Endothelial cell of umbilical vein (primary cell): ENCODE measurements at regions of chr11 and their contacts with region 1.

Region 1: GRCh38 chr11:63635762-63636465 is 21.7 kb upstream of the PLAAT3 start:
- DNase-seq: peak; percentile 68
- H3K4me3 ChIP-seq: no peak overlapping the region
- H3K27ac ChIP-seq: no peak overlapping the region
- H3K4me1 ChIP-seq: no peaks in the 10 kb centered on the region
- H3K27me3 ChIP-seq: no peaks in the 10 kb centered on the region
- CTCF ChIP-seq: peak; percentile 66
- POLR2A ChIP-seq: no peak

Region 2: DNA sequence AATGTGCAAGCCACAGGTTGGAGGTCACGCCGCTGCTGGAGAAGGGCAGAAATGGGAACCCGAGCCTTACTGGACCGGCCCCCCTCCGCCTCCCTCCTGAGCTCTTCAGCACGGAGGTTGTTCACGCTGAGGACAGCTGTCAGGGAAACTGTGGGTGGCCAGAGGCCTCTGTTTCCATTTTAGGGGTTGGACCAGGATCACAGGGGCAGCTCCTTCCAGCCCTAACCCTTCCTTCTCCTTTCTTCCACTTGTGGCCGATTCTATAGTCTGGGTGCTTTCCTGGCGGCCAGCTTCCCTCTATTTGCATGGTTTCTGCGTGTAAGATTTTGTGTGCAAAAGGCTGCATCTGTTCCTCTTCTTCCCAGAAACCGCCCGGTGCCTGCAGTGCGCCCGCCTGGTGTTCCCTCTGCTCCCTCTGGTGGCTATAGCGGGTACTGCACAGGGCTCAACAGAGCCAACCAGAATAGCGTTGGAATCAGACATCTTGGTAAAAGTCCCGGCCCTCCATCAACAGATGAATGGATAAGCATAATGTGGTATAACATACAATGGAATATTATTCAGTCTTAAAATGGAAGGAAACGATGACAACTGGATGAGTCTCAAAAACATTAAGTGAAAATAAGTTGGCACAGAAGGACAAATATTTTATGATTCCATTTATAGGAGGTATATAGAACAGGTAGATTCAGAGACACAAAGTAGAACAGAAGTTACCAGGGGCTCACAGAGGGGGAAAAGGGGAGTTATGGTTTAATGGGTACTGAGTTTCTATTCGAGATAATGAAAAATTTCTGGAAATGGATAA is 611.9 kb before region 1 on chr11:
- CTCF ChIA-PET with region 1: no interaction called
- POLR2A ChIA-PET with region 1: no interaction called
- dilution Hi-C with region 1: no loop called
- intact Hi-C with region 1: loop called (anchors 5 kb)
- DNase-seq: peak; percentile 69
- H3K4me3 ChIP-seq: no peak overlapping the region
- H3K27ac ChIP-seq: no peak overlapping the region
- H3K4me1 ChIP-seq: no peaks in the 10 kb centered on the region
- H3K27me3 ChIP-seq: peaks cover 4 to 10% of the 10 kb centered on the region in 2 experiments
- CTCF ChIP-seq: peak; percentile 98 to 99
- POLR2A ChIP-seq: no peak

Region 3: DNA sequence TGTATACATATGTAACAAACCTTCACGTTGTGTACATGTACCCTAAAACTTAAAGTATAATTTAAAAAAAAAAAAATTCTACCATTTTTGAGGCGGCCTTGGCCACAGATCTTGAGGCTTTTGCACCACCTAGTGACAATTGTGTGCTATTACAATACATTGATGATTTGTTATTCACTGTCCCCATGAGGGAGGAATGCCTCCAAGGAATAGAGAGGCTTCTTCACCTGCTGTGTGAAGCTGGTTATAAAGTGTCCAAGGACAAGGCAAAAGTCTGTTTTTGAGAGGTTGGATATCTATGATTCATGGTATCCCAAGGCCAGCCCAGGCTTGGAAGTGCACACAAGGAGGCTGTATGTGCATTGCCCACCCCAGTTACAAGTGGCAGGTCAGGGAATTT is 423.2 kb before region 1 on chr11:
- CTCF ChIA-PET with region 1: no interaction called
- POLR2A ChIA-PET with region 1: no interaction called
- dilution Hi-C with region 1: no loop called
- intact Hi-C with region 1: loop called (anchors 10 kb)
- DNase-seq: peak; percentile 14
- H3K4me3 ChIP-seq: no peak overlapping the region
- H3K27ac ChIP-seq: no peak overlapping the region
- H3K4me1 ChIP-seq: no peaks in the 10 kb centered on the region
- H3K27me3 ChIP-seq: peaks cover 0 to 2% of the 10 kb centered on the region in 2 experiments
- CTCF ChIP-seq: peak; percentile 34 to 36
- POLR2A ChIP-seq: no peak

Region 4: DNA sequence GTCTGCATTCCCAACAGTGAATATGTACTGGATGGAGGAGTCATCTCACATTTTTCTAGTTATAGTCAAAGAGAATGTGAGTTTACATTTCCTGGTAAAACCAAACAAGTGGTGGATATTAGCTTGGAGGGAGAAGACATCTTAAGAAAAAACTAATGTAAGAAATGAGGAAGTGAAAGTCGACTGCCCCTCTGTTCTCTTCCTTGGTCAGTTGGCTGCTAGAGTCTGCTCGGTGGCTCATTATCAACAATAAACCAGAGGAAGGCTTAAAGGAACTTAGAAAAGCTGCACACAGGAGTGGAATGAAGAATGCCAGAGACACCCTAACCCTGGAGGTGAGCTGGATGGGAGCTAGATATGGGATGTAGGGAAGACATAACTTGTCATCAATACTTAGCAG is 260.5 kb before region 1 on chr11:
- CTCF ChIA-PET with region 1: no interaction called
- POLR2A ChIA-PET with region 1: no interaction called
- dilution Hi-C with region 1: no loop called
- intact Hi-C with region 1: no loop called
- DNase-seq: no peak
- H3K4me3 ChIP-seq: no peak overlapping the region
- H3K27ac ChIP-seq: no peak overlapping the region
- H3K4me1 ChIP-seq: no peaks in the 10 kb centered on the region
- H3K27me3 ChIP-seq: peaks cover 0 to 5% of the 10 kb centered on the region in 2 experiments
- CTCF ChIP-seq: no peak
- POLR2A ChIP-seq: no peak

Region 5: GRCh38 chr11:63592975-63593395 is 42.9 kb before region 1 on chr11:
- CTCF ChIA-PET with region 1: interaction called, 11 read pairs
- POLR2A ChIA-PET with region 1: no interaction called
- dilution Hi-C with region 1: no loop called
- intact Hi-C with region 1: no loop called
- DNase-seq: no peak
- H3K4me3 ChIP-seq: no peak overlapping the region
- H3K27ac ChIP-seq: no peak overlapping the region
- H3K4me1 ChIP-seq: no peaks in the 10 kb centered on the region
- H3K27me3 ChIP-seq: no peaks in the 10 kb centered on the region
- CTCF ChIP-seq: peak; percentile 30 to 44
- POLR2A ChIP-seq: no peak

Region 6: GRCh38 chr11:63621931-63622782 is 13.8 kb before region 1 on chr11:
- CTCF ChIA-PET with region 1: interaction called, 12 read pairs
- POLR2A ChIA-PET with region 1: no interaction called
- dilution Hi-C with region 1: no loop called
- intact Hi-C with region 1: no loop called
- DNase-seq: no peak
- H3K4me3 ChIP-seq: no peak overlapping the region
- H3K27ac ChIP-seq: no peak overlapping the region
- H3K4me1 ChIP-seq: no peaks in the 10 kb centered on the region
- H3K27me3 ChIP-seq: no peaks in the 10 kb centered on the region
- CTCF ChIP-seq: no peak
- POLR2A ChIP-seq: no peak

Region 7: DNA sequence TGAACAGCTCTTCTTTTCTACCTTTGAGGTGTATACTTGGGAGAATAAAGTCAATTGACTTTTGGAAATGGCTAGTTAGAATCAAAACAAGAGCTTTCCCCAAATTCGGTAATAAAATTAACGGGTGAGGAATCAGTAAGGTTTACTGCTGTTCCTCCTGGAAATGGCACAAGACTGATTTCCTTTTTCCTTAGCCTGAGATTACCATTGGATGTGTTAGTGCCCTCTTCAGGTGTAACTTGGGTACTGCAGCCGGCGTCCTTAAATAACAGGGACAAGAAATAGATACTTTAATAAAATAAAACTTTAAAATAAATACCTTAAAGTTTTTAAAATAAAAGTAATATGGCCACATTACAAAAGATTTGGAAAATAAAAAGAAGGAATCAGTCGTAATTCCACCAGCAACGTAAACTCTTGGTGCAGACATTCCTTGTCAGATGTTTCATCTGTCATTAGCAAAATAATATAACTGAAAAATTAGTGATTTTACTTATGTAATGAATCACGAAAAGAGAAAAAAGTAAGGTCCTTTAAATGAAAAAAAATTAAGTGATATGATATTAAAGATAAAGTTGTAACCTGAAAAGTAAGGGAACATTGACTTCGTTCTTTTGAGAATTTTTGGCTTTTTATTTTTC is 102.9 kb after region 1 on chr11:
- CTCF ChIA-PET with region 1: interaction called, 43 read pairs
- POLR2A ChIA-PET with region 1: no interaction called
- dilution Hi-C with region 1: no loop called
- intact Hi-C with region 1: loop called (anchors 1 kb)
- DNase-seq: peak; percentile 89
- H3K4me3 ChIP-seq: no peak overlapping the region
- H3K27ac ChIP-seq: no peak overlapping the region
- H3K4me1 ChIP-seq: no peaks in the 10 kb centered on the region
- H3K27me3 ChIP-seq: no peaks in the 10 kb centered on the region
- CTCF ChIP-seq: peak; percentile 67 to 75
- POLR2A ChIP-seq: no peak